Right ventricle myocardium superior (tissue), 1 donor: ENCODE measurements at regions of chr16 and their contacts with region 1.

Region 1: DNA sequence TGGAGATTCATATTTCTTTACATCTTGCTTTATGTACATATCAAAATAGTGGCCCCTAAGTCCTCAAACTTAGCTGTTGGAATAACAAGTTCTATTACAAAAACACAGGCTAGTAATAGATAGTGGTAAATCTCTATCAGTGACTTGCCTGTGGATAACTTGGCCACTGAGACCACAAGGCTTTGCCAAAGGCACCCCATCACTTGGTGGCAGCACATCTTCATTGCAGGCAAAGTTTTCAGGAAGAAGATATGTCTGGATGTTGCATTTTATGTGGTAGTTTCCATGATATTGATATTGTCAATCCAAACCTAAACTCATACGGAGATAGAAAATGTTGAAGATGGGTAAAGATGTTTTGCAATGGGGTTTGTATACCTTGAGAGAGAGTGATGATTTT is 58.5 kb downstream of the KNOP1 start:
- DNase-seq: no peak
- ATAC-seq: no peak

Region 2: GRCh38 chr16:19567560-19567959 is 92.0 kb before region 1 on chr16:
- intact Hi-C with region 1: no loop called
- DNase-seq: no peak
- ATAC-seq: no peak

Region 3: GRCh38 chr16:19601083-19601976 is 58.2 kb before region 1 on chr16:
- intact Hi-C with region 1: loop called (anchors 10 kb)
- DNase-seq: no peak
- ATAC-seq: peak; percentile 43